Right ventricle myocardium superior (tissue), 1 donor: ENCODE measurements at regions of chr13 and their contacts with region 1.

Region 1: DNA sequence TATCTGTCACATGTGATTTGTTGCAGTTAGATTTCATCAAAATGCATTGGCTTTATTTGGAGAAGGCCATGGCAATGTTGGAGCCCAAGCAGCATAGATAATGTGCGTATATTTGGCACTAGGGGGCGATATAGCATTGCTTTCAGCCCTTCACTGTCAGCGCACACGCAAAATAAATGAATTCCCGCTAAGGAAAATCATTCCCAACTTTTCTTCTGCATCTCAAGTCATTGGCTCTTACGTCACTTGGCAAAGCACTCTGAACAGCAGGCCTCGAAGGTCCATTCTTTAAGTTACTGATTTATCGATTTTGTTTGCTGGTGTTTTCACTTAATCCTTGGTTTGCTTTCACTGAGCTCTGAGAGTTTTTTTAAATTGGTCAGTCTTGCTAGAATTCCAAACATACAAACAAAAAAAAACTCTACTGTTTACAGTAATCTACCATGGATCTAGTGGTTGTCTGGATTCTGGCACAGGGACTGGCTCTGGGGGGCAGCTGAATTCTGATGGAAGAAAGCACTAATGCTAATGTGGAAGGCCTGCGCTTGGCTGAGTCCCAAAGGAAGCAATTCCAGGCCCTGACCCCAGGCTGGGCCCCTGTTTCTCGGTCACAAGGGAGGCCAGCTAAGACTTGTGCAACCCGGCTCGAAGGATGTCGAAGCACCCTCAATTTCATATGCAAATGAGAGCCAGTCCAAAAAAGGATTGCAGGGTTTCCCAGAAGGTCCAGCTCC is 97.7 kb upstream of the IPO5 start:
- DNase-seq: peak; percentile 63
- ATAC-seq: peak; percentile 96

Region 2: GRCh38 chr13:97781891-97782305 is 73.8 kb before region 1 on chr13:
- intact Hi-C with region 1: no loop called
- DNase-seq: peak; percentile 56
- ATAC-seq: peak; percentile 96

Region 3: GRCh38 chr13:97911311-97912128 is 55.8 kb after region 1 on chr13:
- intact Hi-C with region 1: loop called (anchors 10 kb)
- DNase-seq: no peak
- ATAC-seq: no peak

Region 4: DNA sequence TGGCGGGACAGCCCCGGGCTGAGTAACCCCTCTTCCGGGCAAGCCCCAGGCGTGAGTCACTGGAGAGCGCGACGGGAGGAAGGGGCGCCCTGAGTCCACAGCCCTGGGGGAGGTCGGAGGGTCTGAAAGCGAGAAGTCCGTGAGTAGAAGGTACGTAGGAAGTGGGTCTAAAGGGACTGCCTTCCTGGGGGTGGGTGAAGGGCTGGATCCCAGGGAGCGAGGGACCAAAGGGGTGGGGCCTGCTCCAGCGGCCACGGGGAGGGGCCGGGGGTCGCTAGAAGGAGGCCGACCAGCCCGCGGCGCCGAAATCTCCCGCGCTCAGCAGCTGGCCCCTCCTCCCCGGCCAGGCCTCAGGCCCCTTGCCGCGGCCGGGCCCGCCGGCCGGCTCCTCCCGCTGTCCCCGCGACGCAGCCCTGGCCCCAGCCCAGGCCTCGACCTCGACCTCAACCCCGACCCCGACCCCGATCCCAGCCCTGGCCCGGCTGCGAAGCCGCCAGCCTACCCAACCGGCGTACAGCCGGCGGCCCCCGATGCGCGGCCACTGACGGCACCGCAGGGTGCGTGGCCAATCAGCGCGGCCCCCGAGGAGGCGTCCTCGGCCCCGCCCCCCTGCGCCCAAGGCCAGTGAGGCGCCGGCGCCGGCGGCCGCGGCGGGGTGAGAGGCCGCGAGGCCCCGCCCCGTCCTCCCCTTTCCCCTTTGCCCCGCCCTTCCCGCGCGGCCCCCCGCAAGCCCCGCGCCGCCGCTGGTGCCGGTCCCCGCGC is 120.3 kb after region 1 on chr13:
- intact Hi-C with region 1: loop called (anchors 10 kb)
- DNase-seq: peak; percentile 94
- ATAC-seq: peak; percentile 99

Region 5: GRCh38 chr13:98397221-98397620 is 541.5 kb after region 1 on chr13:
- intact Hi-C with region 1: loop called (anchors 5 kb)
- DNase-seq: no peak
- ATAC-seq: no peak

Region 6: DNA sequence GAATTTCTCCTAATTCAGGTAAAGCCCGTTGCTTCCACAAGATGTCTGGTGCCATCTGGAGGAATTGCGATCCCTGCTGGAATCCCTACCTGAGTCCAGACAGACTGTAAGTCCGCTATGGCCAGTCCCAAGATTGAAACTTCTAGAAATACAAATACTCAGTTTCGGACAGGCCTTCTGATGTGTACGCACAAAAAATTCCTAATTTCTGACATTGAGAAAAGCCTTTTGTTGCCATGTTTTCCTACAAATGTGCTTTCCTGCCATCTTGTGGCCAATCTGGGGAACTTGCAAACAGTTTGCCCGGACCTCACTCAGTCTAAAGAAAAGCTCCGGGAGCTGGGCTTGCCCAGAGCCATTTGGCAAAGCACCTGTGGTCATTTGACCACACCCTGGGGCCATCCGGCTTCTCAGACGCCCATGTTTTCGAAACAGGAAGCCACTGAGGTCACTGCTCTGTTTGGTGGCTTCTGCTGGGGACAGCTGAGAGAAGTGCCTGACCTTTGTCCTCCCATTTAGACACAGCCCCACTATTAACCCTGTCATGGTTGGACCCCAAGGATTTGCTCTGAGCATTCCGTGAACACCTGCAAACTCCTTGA is 817.3 kb after region 1 on chr13:
- intact Hi-C with region 1: loop called (anchors 10 kb)
- DNase-seq: peak; percentile 68
- ATAC-seq: peak; percentile 88